Motor neuron (in vitro differentiated cells): ENCODE measurements at regions of chr4 and their contacts with region 1.

Region 1: DNA sequence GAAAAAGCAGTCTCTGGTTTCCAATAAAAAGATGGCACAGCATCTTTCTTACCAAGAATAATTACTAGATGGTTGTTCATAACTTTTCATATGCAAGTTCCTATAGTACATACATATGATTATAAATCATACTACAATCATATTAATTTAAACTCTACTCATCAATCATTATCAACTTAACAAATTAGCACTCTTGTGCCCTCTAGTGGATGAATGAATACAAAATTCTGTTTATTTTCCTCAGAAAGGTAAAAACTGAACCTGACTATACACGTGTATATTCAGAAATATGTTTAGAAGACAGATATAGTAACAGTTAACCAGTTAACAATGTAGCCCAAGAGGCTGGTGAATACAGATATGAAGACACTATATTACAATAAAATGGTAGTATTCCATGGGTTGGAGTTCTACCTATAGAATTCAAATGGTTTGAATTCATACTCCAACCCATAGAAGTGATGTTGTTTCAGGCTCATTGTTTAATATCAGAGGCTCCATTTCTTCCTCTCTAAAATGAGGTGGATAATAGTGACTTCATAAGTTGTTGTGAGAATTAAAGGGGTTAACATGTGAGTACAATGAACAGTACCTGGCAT is 100.0 kb downstream of the ADAMTS3 start:
- ATAC-seq: no peak
- H3K4me3 ChIP-seq: no peak overlapping the region
- H3K27ac ChIP-seq: no peak overlapping the region
- H3K4me1 ChIP-seq: no peaks in the 10 kb centered on the region

Region 2: GRCh38 chr4:72094059-72094797 is 374.8 kb before region 1 on chr4:
- in situ Hi-C with region 1: no loop called
- ATAC-seq: peak in 4 of 8 experiments; percentile 21 to 55 (median 40)
- H3K4me3 ChIP-seq: no peak overlapping the region
- H3K27ac ChIP-seq: no peak overlapping the region
- H3K4me1 ChIP-seq: no peaks in the 10 kb centered on the region

Region 3: DNA sequence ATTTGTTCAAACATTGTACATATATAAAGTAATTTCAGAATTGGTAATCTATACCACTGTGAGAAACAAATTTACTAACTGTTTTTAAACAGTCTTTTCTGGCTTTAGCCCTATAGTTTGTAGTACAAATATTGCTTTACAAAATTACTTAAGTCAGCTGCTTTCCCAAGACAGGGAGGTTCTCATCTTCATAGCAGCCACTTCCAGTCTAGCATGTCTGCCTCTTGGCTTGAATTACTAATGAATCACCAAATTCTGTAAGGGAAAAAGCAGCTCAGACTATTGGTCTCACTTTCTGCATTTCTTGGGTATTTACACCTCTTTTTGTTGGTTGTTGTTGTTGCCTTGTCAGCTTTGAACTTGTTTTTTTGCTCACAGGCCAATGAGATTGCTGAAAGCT is 250.1 kb before region 1 on chr4:
- in situ Hi-C with region 1: no loop called
- ATAC-seq: peak in 2 of 8 experiments; percentile 84 to 97
- H3K4me3 ChIP-seq: no peak overlapping the region
- H3K27ac ChIP-seq: no peak overlapping the region
- H3K4me1 ChIP-seq: no peaks in the 10 kb centered on the region

Region 4: DNA sequence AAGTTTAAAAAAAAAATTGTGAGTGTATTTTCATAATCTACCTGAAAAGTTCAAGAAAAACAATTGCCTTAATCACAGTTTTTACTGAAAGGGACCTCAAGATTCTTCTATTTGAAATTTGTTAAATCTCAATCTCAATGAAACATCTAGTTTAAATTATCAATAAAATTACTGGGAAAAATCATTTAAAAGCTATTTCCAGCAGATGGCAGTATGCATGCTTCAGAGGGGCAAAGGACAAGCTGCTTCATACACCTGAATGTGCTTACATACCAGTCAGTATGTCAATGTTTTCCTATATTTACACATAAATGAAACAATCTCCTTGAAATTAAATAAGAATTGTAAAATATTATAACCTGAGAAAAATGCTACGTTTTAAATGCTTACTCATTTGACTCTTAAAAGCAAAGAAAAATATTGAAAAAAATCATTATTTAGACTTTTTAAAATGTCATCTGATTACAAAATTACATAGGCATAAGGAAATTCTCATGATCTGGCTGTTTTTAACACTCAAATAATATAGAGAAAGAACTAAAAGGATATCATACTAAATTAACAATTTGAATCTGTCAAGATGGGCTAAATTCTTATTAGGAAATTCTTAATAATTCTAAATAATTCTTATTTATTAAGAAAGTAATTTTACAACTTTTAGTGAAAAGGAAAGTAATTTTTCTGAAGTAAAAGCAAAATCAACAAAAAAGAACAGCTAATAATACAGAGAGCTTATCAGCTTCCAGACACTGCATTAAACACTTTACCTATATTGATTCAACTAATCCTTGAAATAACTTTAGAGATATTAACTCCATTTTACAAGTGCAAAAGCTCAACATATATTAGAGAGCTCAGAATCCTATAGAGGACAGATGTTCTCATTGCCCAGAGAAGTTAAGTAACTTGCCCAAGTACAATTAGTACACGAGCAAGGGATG is 142.0 kb before region 1 on chr4:
- in situ Hi-C with region 1: loop called in 2 of 9 experiments (anchors 10 kb)
- ATAC-seq: no peak
- H3K4me3 ChIP-seq: no peak overlapping the region
- H3K27ac ChIP-seq: no peak overlapping the region
- H3K4me1 ChIP-seq: no peaks in the 10 kb centered on the region

Region 5: GRCh38 chr4:72641611-72642010 is 172.6 kb after region 1 on chr4:
- in situ Hi-C with region 1: no loop called
- ATAC-seq: no peak
- H3K4me3 ChIP-seq: no peak overlapping the region
- H3K27ac ChIP-seq: no peak overlapping the region
- H3K4me1 ChIP-seq: no peaks in the 10 kb centered on the region